Common myeloid progenitor, CD34-positive (primary cell): ENCODE measurements at regions of chr6 and their contacts with region 1.

Region 1: GRCh38 chr6:153023977-153024708 is 21.6 kb upstream of the MTRF1L start:
- DNase-seq: peak; percentile 67 to 75 (median 71)
- H3K4me3 ChIP-seq: no peak overlapping the region
- H3K27ac ChIP-seq: no peak overlapping the region
- H3K4me1 ChIP-seq: peaks cover 0 to 4% (median 0%) of the 10 kb centered on the region in 4 experiments
- H3K27me3 ChIP-seq: no peaks in the 10 kb centered on the region

Region 2: GRCh38 chr6:152954443-152954842 is 69.7 kb before region 1 on chr6:
- CTCF ChIA-PET with region 1: interaction called, 13 read pairs
- POLR2A ChIA-PET with region 1: no interaction called
- DNase-seq: no peak
- H3K4me3 ChIP-seq: no peak overlapping the region
- H3K27ac ChIP-seq: no peak overlapping the region
- H3K4me1 ChIP-seq: no peaks in the 10 kb centered on the region
- H3K27me3 ChIP-seq: peaks cover 0 to 2% (median 0%) of the 10 kb centered on the region in 5 experiments